Activated B cell treated with CpG ODN at 0.5 μM for 24 hours (primary cell): ENCODE measurements at regions of chr3 and their contacts with region 1.

Region 1: GRCh38 chr3:99817437-99818240 is at the start of gene CMSS1:
- DNase-seq: peak; percentile 96
- ATAC-seq: peak; percentile 94
- H3K4me3 Mint-ChIP-seq: peak within 1 kb of the TSS; percentile 97
- H3K27ac Mint-ChIP-seq: peak within 1 kb of the TSS; percentile 99
- H3K4me1 Mint-ChIP-seq: peaks cover 37% of the 10 kb centered on the region
- H3K27me3 Mint-ChIP-seq: no peaks in the 10 kb centered on the region
- CTCF ChIP-seq: no peak
- total RNA-seq, gene CMSS1: 37.4 and 41.1 TPM in 2 replicates

Region 2: DNA sequence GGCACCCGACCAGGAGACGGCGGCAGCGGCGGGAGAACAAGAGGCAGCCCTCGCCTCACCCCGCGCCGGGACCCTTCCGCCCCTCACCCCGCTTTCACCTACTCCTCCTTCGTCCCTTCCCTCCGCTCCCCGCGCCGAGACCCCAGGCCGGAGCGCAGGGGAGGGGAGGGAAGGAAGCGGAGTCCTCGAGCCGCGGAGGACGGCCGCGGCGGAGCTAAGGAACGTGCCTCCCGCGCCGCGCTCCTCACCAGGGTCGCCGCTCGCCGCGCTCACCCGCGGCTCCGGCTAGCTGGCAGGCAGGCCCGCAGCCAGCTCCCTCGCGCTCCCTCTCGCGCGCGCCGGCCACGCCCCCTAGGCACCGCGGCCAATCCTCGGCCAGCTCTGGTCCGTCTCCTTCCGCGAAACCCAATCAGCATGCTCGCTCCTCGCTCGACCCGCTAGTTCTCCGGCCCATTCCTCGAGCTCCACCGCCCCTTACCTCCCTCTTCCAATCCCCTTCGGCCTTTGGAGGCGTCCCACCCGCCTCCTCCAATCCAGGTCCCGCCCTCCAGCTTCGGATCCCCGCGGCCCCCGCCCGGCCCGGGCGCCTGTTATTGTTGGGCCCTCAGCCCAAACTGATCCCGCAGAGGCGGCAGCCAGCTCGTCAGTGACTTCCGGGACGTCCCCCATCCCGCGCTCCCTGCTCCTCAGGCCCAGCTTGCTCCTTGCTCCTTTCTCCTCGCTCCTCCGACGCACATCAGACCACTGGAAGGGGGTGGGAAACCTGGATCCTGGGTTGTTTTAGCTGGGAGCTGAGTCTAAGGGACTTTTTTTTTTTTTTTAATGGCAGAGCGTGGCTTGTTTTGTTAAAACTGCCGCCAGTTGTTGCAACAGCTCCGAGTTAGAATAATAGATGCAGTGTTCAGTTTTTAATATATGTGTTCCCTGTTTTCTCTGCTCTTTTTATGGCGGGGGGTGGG is 916.0 kb before region 1 on chr3 and contains the start of gene DCBLD2:
- CTCF ChIA-PET with region 1: no interaction called
- POLR2A ChIA-PET with region 1: no interaction called
- intact Hi-C with region 1: loop called (anchors 1 kb)
- DNase-seq: peak; percentile 86
- ATAC-seq: peak; percentile 98
- H3K4me3 Mint-ChIP-seq: peak within 1 kb of the TSS; percentile 88
- H3K27ac Mint-ChIP-seq: peak within 1 kb of the TSS; percentile 73
- H3K4me1 Mint-ChIP-seq: peaks cover 19% of the 10 kb centered on the region
- H3K27me3 Mint-ChIP-seq: peaks cover 12% of the 10 kb centered on the region
- CTCF ChIP-seq: no peak
- total RNA-seq, gene DCBLD2: 0.95 and 1.8 TPM in 2 replicates

Region 3: GRCh38 chr3:99833617-99834205 is 16.1 kb after region 1 on chr3:
- CTCF ChIA-PET with region 1: interaction called, 14 read pairs
- POLR2A ChIA-PET with region 1: no interaction called
- intact Hi-C with region 1: no loop called
- DNase-seq: no peak
- ATAC-seq: no peak
- H3K4me3 Mint-ChIP-seq: no peak overlapping the region
- H3K27ac Mint-ChIP-seq: no peak overlapping the region
- H3K4me1 Mint-ChIP-seq: no peaks in the 10 kb centered on the region
- H3K27me3 Mint-ChIP-seq: no peaks in the 10 kb centered on the region
- CTCF ChIP-seq: no peak

Region 4: DNA sequence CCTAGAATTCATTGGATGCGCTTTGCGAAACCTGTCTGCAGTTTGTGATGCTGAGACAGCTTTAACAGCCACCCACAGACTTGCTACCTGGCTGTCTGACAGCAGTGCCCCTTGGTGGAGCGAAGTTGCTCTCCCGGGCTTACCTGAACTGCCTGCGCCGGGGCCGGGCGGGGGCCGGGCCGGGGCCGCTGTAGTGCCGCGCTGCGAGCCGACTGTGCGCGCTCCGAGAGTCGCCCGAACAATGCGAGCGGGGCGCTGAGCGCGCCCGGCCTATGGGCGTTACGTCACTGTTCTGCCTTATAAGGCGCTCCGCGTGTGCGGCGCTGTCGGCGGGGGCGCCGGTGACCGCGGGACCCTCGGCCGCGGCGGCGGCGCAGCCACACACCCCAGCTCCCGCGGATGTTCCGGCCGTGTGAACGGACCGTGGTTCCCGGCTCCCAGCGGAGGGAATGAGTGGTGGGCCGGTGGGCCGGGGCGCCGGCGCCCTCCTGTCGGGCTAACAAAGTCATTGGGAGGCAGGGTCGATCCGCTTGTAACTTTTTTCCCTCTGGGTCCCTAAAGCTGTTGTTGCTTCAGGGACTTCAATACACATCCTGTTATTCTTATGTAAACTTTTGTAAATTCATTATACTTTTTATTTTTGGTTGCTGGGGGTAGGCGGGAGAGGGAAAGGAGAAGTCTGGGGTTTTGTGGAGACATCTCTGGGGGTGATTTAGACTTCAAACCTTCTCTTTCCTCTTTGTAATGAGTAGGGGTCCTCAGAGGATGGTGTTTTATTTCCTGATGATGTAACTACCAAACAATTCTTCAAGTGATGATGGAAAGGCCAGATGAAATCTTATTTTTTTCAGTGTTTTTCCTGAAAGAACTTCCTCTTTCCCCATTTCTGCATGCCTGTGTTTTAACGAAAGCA is 58.5 kb after region 1 on chr3:
- CTCF ChIA-PET with region 1: no interaction called
- POLR2A ChIA-PET with region 1: interaction called, 4 read pairs
- intact Hi-C with region 1: loop called (anchors 1 kb)
- DNase-seq: peak; percentile 69
- ATAC-seq: peak; percentile 98
- H3K4me3 Mint-ChIP-seq: peak overlapping the region; percentile 81
- H3K27ac Mint-ChIP-seq: peak overlapping the region; percentile 39
- H3K4me1 Mint-ChIP-seq: peaks cover 26% of the 10 kb centered on the region
- H3K27me3 Mint-ChIP-seq: no peaks in the 10 kb centered on the region
- CTCF ChIP-seq: no peak

Region 5: DNA sequence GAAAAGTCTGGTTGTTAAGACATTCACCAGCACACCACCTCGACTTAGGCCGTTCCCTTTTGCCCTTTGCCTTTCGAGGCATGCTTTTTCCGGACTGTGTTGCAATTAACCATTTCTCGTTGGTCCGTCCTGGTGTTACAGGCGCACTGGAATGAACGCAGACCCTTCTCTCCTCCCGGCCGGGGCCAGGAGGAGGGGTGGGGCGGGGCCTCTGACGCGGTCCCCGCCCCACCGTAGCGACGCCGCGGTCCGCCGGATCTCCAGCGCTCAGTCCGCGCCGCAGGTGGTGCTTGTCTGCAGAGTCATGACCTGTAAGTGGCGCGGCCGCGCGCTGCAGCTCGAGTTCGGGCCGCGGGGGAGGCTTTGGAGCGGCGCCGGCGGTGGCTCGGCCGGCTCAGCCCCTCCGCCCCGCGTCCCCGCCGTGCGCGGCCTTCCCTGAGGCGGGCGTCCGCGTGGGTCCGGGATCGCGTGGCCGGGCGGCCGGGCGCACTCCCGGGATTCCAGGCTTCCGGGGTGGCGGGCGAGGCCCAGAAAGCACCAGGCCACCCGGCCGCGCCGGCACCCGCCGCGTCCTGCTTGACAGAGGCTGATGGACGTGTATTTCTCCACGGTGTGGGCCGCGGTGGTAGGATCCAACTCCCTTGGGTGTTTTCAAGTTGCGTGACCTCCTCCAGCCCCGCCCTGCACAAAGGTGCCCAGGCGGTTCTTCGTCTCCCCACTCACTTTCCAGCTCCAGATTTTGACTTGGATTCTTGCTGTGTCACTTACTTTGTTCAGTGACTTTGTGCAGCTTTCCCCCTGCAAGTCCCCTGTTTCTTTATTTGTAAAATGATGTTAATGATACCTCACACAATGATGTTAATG is 517.1 kb after region 1 on chr3 and contains the start of gene NIT2:
- CTCF ChIA-PET with region 1: no interaction called
- POLR2A ChIA-PET with region 1: no interaction called
- intact Hi-C with region 1: loop called (anchors 1 kb)
- DNase-seq: peak; percentile 72
- ATAC-seq: peak; percentile 96
- H3K4me3 Mint-ChIP-seq: peak within 1 kb of the TSS; percentile 91
- H3K27ac Mint-ChIP-seq: peak within 1 kb of the TSS; percentile 92
- H3K4me1 Mint-ChIP-seq: peaks cover 19% of the 10 kb centered on the region
- H3K27me3 Mint-ChIP-seq: no peaks in the 10 kb centered on the region
- CTCF ChIP-seq: no peak
- total RNA-seq, gene NIT2: 52.0 and 55.6 TPM in 2 replicates

Region 6: DNA sequence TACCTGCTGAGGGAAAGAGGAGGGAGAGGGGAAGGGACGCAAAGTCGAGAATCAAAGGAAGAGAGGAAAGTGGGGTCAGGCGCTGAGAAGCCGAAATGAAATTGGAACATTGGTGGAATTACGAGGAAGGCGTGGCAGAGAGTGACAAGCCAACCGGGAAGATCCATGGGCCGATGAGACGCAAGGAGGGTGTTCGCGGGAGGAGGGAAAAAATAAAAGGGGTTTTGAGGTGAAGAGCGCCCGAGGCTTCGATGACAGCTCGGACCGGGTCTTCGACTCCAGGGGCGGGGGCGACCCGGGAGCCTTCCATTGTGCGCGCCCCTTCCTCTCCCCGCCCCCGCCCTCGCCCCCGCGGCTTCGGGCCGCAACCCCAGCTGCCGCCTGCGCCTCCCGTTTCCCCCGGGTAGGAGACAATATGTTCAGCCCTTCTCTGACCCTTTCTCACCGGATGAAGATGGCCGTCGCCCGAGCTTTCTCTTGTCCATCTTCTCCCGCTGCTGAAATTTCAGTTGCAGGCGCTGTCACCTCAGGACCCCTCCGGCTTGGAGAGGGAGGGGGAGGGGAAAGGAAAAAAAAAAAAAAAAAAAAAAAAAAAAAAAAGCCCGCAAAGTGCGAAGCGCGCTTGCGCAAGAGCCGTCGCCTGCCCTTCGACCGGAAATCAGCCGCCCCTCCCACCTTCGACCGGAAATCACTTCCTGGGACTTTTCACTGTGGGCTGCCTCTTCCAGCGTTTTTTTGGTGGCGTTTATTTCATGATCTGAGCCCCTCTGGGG is 1695.2 kb after region 1 on chr3 and contains the start of gene SENP7:
- CTCF ChIA-PET with region 1: no interaction called
- POLR2A ChIA-PET with region 1: no interaction called
- intact Hi-C with region 1: loop called (anchors 5 kb)
- DNase-seq: peak; percentile 74
- ATAC-seq: peak; percentile 72
- H3K4me3 Mint-ChIP-seq: peak within 1 kb of the TSS; percentile 98
- H3K27ac Mint-ChIP-seq: peak within 1 kb of the TSS; percentile 99
- H3K4me1 Mint-ChIP-seq: peaks cover 35% of the 10 kb centered on the region
- H3K27me3 Mint-ChIP-seq: no peaks in the 10 kb centered on the region
- CTCF ChIP-seq: no peak
- total RNA-seq, gene SENP7: 18.6 and 22.1 TPM in 2 replicates